Ascending aorta (tissue), 2 donors: ENCODE measurements at regions of chr14 and their contacts with region 1.

Region 1: GRCh38 chr14:100108042-100108825 is 43.0 kb downstream of the EVL start:
- DNase-seq: peak in 1 of 2 donors; percentile 90
- H3K4me3 ChIP-seq: no peak overlapping the region
- H3K27ac ChIP-seq: no peak overlapping the region
- H3K4me1 ChIP-seq: peaks cover 20 to 34% of the 10 kb centered on the region in 2 donors
- H3K27me3 ChIP-seq: no peaks in the 10 kb centered on the region
- CTCF ChIP-seq: peak; percentile 72 to 88 (median 77)

Region 2: DNA sequence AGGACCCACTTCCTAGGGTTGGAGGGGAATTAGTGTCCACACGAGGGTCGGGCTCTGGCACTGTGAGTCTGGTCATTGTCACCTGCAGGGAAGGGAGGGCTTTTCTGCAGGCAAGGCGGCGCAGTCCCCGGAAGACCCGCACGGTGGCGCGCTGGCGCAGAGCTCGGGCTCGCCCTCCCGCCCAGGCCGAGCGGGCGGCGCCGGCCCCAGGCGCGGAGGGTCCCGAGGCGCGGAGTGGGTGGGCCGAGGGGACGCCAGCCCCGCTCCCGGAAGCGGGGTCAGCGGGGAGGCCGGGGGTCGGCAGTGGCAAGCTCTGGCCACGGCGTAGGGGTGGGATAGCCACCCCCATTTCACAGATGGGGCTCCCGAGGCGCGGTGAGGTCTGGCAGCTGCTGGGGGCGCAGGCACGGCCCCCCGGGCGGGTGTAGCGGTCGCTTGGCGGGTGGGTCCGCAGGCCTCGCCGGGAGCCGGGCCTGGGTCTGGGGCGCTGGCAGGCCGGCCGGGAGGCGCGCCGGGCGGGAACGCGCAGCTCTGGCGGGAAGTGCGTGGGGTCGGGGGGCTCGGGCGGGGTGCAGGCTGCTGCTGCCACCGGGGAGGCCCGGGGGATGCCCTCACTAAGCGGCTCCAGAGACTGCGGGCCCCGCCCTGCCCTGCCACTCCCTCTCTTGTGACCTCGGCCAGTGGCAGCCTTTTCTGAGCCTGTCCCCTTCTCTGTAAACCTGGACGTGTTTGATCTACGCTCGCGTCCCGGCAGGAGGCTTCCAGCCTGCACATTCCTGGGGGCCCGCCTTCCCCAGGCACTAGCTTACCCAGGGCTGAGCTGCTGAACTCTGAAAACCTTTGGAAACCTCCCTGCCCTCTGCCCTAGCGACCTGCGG is 378.0 kb before region 1 on chr14:
- intact Hi-C with region 1: loop called (anchors 10 kb)
- DNase-seq: peak; percentile 1 to 81
- H3K4me3 ChIP-seq: peak overlapping the region; percentile 52 to 85
- H3K27ac ChIP-seq: peak overlapping the region; percentile 22 to 30
- H3K4me1 ChIP-seq: peaks cover 3 to 13% of the 10 kb centered on the region in 2 donors
- H3K27me3 ChIP-seq: no peaks in the 10 kb centered on the region
- CTCF ChIP-seq: peak; percentile 66 to 89 (median 78)

Region 3: GRCh38 chr14:99930420-99931274 is 177.6 kb before region 1 on chr14:
- intact Hi-C with region 1: no loop called
- DNase-seq: peak in 1 of 2 donors; percentile 56
- H3K4me3 ChIP-seq: no peak overlapping the region
- H3K27ac ChIP-seq: no peak overlapping the region
- H3K4me1 ChIP-seq: no peaks in the 10 kb centered on the region
- H3K27me3 ChIP-seq: no peaks in the 10 kb centered on the region
- CTCF ChIP-seq: no peak

Region 4: DNA sequence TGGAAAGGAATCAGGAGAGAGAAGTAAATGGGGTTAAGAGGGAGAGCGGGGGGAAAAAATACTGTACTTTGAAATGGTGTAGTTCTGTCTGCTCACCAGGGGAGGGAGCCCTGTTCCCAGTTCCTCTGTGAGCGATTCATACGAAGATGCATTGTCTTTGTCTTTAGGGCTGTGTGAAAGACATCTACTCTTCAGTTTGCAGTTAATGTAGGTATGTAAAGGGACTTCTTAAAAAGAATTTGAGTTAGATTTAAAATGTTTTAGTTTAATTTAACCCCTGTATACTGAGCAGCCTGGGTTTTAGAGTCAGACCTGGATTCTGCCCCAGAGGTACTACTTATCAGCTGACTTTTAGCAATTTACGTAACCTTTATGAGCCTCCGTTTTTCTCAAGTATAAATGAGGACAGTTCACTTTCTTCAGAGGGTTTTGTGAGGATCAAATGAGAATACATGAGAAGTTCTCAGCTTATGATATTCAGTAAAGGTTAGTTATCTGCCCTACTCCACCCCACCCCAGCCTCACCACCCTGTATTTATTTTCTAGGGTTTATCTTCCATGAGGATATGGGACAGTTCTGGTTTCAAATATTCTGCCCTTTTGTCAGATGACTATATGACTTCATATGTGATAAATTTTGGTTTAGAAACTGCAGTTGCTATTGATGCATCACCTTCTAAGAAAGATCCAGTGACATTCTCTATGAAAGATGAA is 125.5 kb before region 1 on chr14:
- intact Hi-C with region 1: loop called (anchors 1 kb)
- DNase-seq: peak in 1 of 2 donors; percentile 69
- H3K4me3 ChIP-seq: no peak overlapping the region
- H3K27ac ChIP-seq: no peak overlapping the region
- H3K4me1 ChIP-seq: no peaks in the 10 kb centered on the region
- H3K27me3 ChIP-seq: no peaks in the 10 kb centered on the region
- CTCF ChIP-seq: peak; percentile 71 to 86 (median 85)

Region 5: GRCh38 chr14:100031536-100032281 is 76.5 kb before region 1 on chr14:
- intact Hi-C with region 1: loop called (anchors 5 kb)
- DNase-seq: peak; percentile 14 to 85
- H3K4me3 ChIP-seq: peak overlapping the region in 1 of 2 donors; percentile 34
- H3K27ac ChIP-seq: peak overlapping the region; percentile 42 to 48
- H3K4me1 ChIP-seq: peaks cover 0 to 17% of the 10 kb centered on the region in 2 donors
- H3K27me3 ChIP-seq: no peaks in the 10 kb centered on the region
- CTCF ChIP-seq: no peak

Region 6: GRCh38 chr14:100056964-100057795 is 51.1 kb before region 1 on chr14:
- intact Hi-C with region 1: loop called (anchors 5 kb)
- DNase-seq: no peak
- H3K4me3 ChIP-seq: no peak overlapping the region
- H3K27ac ChIP-seq: peak overlapping the region; percentile 31 to 49
- H3K4me1 ChIP-seq: no peaks in the 10 kb centered on the region
- H3K27me3 ChIP-seq: no peaks in the 10 kb centered on the region
- CTCF ChIP-seq: peak; percentile 25 to 45 (median 30)

Region 7: GRCh38 chr14:100192672-100193416 is 84.6 kb after region 1 on chr14:
- intact Hi-C with region 1: loop called (anchors 2 kb)
- DNase-seq: peak; percentile 97 to 100
- H3K4me3 ChIP-seq: peak overlapping the region; percentile 54 to 68
- H3K27ac ChIP-seq: peak overlapping the region; percentile 84 to 94
- H3K4me1 ChIP-seq: peaks cover 0 to 9% of the 10 kb centered on the region in 2 donors
- H3K27me3 ChIP-seq: no peaks in the 10 kb centered on the region
- CTCF ChIP-seq: peak; percentile 79 to 90 (median 81)